H1 (cell line): ENCODE measurements at regions of chr16 and their contacts with region 1.

Region 1: GRCh38 chr16:50593410-50594150 is 45.4 kb downstream of the NKD1 start:
- DNase-seq: peak; percentile 23 to 70
- H3K4me3 ChIP-seq: no peak overlapping the region
- H3K27ac ChIP-seq: no peak overlapping the region
- H3K4me1 ChIP-seq: peaks cover 0 to 19% (median 10%) of the 10 kb centered on the region in 4 experiments; a peak in 6 of 7 replicates
- H3K27me3 ChIP-seq: no peaks in the 10 kb centered on the region; a peak in 1 of 7 replicates
- CTCF ChIP-seq: peak; percentile 55 to 82 (median 69)
- EP300 ChIP-seq: no peak
- POLR2A ChIP-seq: no peak; a peak in 1 of 3 replicates
- RAD21 ChIP-seq: peak; percentile 78 to 85

Region 2: GRCh38 chr16:50472472-50472871 is 121.1 kb before region 1 on chr16:
- CTCF ChIA-PET with region 1: no interaction called
- POLR2A ChIA-PET with region 1: no interaction called
- DNase-seq: no peak
- H3K4me3 ChIP-seq: no peak overlapping the region
- H3K27ac ChIP-seq: no peak overlapping the region
- H3K4me1 ChIP-seq: peaks cover 3 to 16% (median 14%) of the 10 kb centered on the region in 4 experiments
- H3K27me3 ChIP-seq: peaks cover 3 to 17% (median 17%) of the 10 kb centered on the region in 4 experiments
- CTCF ChIP-seq: no peak
- EP300 ChIP-seq: no peak
- POLR2A ChIP-seq: no peak
- RAD21 ChIP-seq: no peak

Region 3: DNA sequence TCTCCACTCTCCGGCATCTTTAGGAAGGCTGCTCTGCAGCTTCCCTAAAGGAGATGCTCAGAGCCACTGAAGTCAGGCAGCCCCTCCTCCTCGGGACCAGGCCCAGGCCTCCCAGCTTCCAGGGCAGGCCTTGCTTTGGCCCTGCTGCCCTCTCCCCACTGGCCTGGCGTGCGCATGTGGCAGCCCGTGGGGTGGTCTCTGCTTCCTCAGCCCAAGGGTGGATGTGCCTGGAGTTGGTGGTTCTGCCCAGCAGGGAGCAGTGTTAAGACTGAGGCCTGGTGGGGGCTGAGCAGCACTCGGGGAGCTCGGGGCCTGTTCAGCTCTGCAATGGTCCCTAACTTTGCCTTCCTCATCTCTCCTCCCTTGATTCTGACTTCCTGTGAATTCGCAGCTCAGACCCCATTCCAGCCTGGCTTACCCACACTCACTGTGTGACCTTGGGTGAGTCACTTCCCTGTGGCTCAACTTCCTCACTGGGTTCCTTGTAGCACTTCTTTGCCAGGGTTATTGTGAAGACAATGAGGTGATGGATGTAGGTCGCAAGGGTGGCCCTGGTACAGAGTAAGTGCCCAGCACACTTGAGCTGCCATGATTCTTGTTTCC is 17.9 kb after region 1 on chr16:
- CTCF ChIA-PET with region 1: interaction called, 41 read pairs
- POLR2A ChIA-PET with region 1: interaction called, 5 read pairs
- DNase-seq: no peak
- H3K4me3 ChIP-seq: no peak overlapping the region
- H3K27ac ChIP-seq: no peak overlapping the region
- H3K4me1 ChIP-seq: peaks cover 4 to 18% (median 7%) of the 10 kb centered on the region in 4 experiments; a peak in 6 of 7 replicates
- H3K27me3 ChIP-seq: peaks cover 0 to 1% (median 0%) of the 10 kb centered on the region in 4 experiments; a peak in 1 of 7 replicates
- CTCF ChIP-seq: no peak
- EP300 ChIP-seq: no peak
- POLR2A ChIP-seq: no peak
- RAD21 ChIP-seq: no peak

Region 4: GRCh38 chr16:50627419-50627818 is 33.8 kb after region 1 on chr16:
- CTCF ChIA-PET with region 1: interaction called, 19 read pairs
- POLR2A ChIA-PET with region 1: no interaction called
- DNase-seq: peak in 1 of 2 experiments; percentile 58
- H3K4me3 ChIP-seq: no peak overlapping the region
- H3K27ac ChIP-seq: no peak overlapping the region
- H3K4me1 ChIP-seq: no peaks in the 10 kb centered on the region
- H3K27me3 ChIP-seq: no peaks in the 10 kb centered on the region
- CTCF ChIP-seq: peak; percentile 24 to 48 (median 33)
- EP300 ChIP-seq: no peak
- POLR2A ChIP-seq: no peak
- RAD21 ChIP-seq: peak; percentile 35 to 41; a peak in 3 of 4 replicates

Region 5: GRCh38 chr16:50635505-50636392 is 42.2 kb after region 1 on chr16:
- CTCF ChIA-PET with region 1: interaction called, 15 read pairs
- POLR2A ChIA-PET with region 1: no interaction called
- DNase-seq: no peak
- H3K4me3 ChIP-seq: no peak overlapping the region
- H3K27ac ChIP-seq: no peak overlapping the region
- H3K4me1 ChIP-seq: no peaks in the 10 kb centered on the region
- H3K27me3 ChIP-seq: peaks cover 0 to 1% (median 0%) of the 10 kb centered on the region in 4 experiments; a peak in 1 of 7 replicates
- CTCF ChIP-seq: no peak
- EP300 ChIP-seq: no peak
- POLR2A ChIP-seq: no peak
- RAD21 ChIP-seq: no peak

Region 6: GRCh38 chr16:50657241-50657640 is 63.7 kb after region 1 on chr16:
- CTCF ChIA-PET with region 1: interaction called, 279 read pairs
- POLR2A ChIA-PET with region 1: no interaction called
- DNase-seq: no peak
- H3K4me3 ChIP-seq: no peak overlapping the region
- H3K27ac ChIP-seq: no peak overlapping the region
- H3K4me1 ChIP-seq: no peaks in the 10 kb centered on the region
- H3K27me3 ChIP-seq: no peaks in the 10 kb centered on the region
- CTCF ChIP-seq: no peak
- EP300 ChIP-seq: no peak
- POLR2A ChIP-seq: no peak
- RAD21 ChIP-seq: no peak